ENCODE measurements at regions of chr20 and their contacts with region 1.

Region 1: GRCh38 chr20:38221119-38221589 is 39.4 kb downstream of the KIAA1755 start:
- DNase-seq: peak; percentile 73
- H3K4me3 Mint-ChIP-seq: no peak overlapping the region
- H3K27ac Mint-ChIP-seq: no peak overlapping the region
- H3K4me1 Mint-ChIP-seq: peaks cover 3% of the 10 kb centered on the region
- H3K27me3 Mint-ChIP-seq: peaks cover 2% of the 10 kb centered on the region

Region 2: GRCh38 chr20:38057351-38057972 is 163.7 kb before region 1 on chr20:
- CTCF ChIA-PET with region 1: interaction called, 14 read pairs
- POLR2A ChIA-PET with region 1: interaction called, 3 read pairs
- DNase-seq: peak; percentile 80
- H3K4me3 Mint-ChIP-seq: no peak overlapping the region
- H3K27ac Mint-ChIP-seq: peak overlapping the region; percentile 81
- H3K4me1 Mint-ChIP-seq: peaks cover 23% of the 10 kb centered on the region
- H3K27me3 Mint-ChIP-seq: no peaks in the 10 kb centered on the region

Region 3: DNA sequence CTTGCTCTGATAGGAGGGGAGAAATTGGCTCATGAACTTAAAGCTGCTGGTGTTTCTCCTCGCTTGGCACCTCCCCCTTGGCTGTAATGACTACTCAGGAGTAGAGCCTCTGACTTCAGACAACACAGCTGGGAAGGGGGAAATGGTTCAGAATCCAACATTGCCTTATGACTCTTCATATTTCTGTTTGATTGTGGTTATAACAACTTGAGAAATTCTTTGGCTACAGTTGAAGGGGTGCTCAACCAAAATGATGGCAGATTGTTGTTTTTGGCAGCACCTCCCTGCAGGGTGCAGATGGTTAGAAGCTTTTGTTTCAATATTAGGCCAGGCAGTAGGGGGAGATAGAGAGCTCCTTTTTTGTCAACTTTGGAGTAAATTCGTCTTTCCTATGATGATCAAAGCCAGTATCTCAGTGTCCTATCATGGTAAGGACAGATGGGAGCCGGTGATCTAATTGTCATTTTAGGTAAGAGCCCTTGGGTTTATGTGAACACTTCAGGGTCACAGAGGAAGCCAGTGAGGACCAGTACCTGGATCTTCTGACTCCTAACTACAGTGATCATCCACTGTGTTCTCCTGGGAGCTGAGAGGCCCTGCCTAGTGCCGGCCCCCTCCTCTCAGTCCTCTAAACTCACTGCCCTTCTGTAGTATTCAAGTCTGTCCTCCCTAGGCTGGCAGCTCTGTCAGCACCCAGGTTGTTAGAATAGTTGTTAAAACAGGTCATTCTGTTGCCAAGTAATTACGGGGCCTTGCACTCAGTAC is 147.7 kb before region 1 on chr20:
- CTCF ChIA-PET with region 1: interaction called, 11 read pairs
- POLR2A ChIA-PET with region 1: no interaction called
- DNase-seq: peak; percentile 50
- H3K4me3 Mint-ChIP-seq: no peak overlapping the region
- H3K27ac Mint-ChIP-seq: no peak overlapping the region
- H3K4me1 Mint-ChIP-seq: peaks cover 7% of the 10 kb centered on the region
- H3K27me3 Mint-ChIP-seq: no peaks in the 10 kb centered on the region

Measured in activated CD4-positive, alpha-beta T cell treated with anti-CD3 and anti-CD28 coated beads, Interleukin-2, amount 10 ng/mL, durations not matched to agents 7 days and 5 days (primary cell).